Thyroid gland (tissue), 4 donors: ENCODE measurements at regions of chr6 and their contacts with region 1.

Region 1: GRCh38 chr6:8219352-8219943 is 117.1 kb upstream of the EEF1E1 start:
- DNase-seq: peak; percentile 37 to 39
- H3K4me3 ChIP-seq: no peak overlapping the region
- H3K27ac ChIP-seq: no peak overlapping the region
- H3K4me1 ChIP-seq: no peaks in the 10 kb centered on the region
- H3K27me3 ChIP-seq: no peaks in the 10 kb centered on the region
- CTCF ChIP-seq: peak; percentile 66 to 82 (median 74)
- POLR2A ChIP-seq: no peak

Region 2: GRCh38 chr6:7431674-7432390 is 787.6 kb before region 1 on chr6:
- intact Hi-C with region 1: no loop called
- DNase-seq: peak; percentile 63 to 66
- H3K4me3 ChIP-seq: no peak overlapping the region
- H3K27ac ChIP-seq: no peak overlapping the region
- H3K4me1 ChIP-seq: no peaks in the 10 kb centered on the region
- H3K27me3 ChIP-seq: no peaks in the 10 kb centered on the region
- CTCF ChIP-seq: no peak
- POLR2A ChIP-seq: no peak

Region 3: DNA sequence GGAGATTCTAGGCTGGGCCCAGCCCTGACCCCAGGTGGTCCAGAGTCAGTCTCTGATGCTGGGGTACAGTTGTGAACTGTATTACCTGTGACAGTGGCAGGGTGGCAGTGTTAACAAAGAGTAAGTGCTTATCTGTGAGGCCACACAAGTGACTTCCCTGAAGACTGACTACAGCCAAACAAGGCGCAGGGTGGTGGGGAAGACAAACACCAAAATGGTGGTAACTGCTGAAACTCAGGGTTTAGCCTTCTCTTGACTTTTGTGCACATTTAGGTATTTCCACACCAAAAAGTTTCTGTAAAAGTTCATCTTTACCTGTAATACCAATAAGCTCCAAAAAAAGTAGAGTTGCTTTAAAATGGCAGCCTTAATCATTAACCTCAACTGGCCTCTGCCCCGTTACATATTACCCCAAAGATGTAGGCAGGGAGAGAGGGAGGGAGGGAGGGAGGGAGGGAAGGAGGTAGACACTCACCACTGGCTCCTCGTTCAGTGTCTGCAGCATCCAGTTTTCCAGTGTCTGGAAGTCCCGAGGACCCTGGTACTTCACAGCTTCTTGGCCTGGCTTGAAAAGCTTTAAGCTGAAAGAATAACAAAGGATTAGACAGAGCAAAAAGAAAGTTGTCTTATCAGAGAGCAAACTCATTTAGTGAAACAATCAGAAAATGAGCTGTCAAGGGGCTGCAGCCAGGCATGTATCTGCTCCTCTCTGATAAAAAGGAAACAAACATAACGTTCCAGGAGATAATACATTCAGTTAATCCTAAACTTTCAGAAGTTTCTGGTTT is 320.2 kb before region 1 on chr6:
- intact Hi-C with region 1: no loop called
- DNase-seq: no peak
- H3K4me3 ChIP-seq: no peak overlapping the region
- H3K27ac ChIP-seq: no peak overlapping the region
- H3K4me1 ChIP-seq: no peaks in the 10 kb centered on the region
- H3K27me3 ChIP-seq: no peaks in the 10 kb centered on the region
- CTCF ChIP-seq: no peak
- POLR2A ChIP-seq: no peak

Region 4: GRCh38 chr6:8131256-8131897 is 88.1 kb before region 1 on chr6:
- intact Hi-C with region 1: loop called (anchors 2 kb)
- DNase-seq: peak; percentile 54 to 62
- H3K4me3 ChIP-seq: no peak overlapping the region
- H3K27ac ChIP-seq: no peak overlapping the region
- H3K4me1 ChIP-seq: no peaks in the 10 kb centered on the region
- H3K27me3 ChIP-seq: no peaks in the 10 kb centered on the region
- CTCF ChIP-seq: peak in 4 of 6 experiments; percentile 54 to 83 (median 70)
- POLR2A ChIP-seq: no peak

Region 5: DNA sequence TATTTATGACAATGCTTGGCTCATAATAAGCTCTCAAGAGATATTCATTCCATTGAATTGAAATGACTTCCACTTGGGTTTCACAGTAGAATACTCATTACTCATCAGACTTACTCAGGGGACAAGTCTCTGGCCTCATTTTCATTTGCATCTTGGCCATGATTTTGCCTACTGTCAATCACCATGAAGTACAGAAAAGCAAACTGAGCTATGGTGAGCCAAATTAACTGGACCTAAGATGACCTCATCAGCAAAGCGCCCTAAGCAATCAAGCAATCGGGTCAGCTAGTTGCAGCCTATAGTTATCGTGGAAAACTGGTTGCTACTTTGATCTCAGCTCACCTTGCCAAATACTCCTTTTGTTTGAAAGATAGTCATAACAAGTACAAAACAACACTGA is 710.6 kb after region 1 on chr6:
- intact Hi-C with region 1: no loop called
- DNase-seq: no peak
- H3K4me3 ChIP-seq: no peak overlapping the region
- H3K27ac ChIP-seq: no peak overlapping the region
- H3K4me1 ChIP-seq: no peaks in the 10 kb centered on the region
- H3K27me3 ChIP-seq: no peaks in the 10 kb centered on the region
- CTCF ChIP-seq: no peak
- POLR2A ChIP-seq: no peak

Region 6: GRCh38 chr6:9252799-9253198 is 1033.4 kb after region 1 on chr6:
- intact Hi-C with region 1: no loop called
- DNase-seq: no peak
- H3K4me3 ChIP-seq: no peak overlapping the region
- H3K27ac ChIP-seq: no peak overlapping the region
- H3K4me1 ChIP-seq: no peaks in the 10 kb centered on the region
- H3K27me3 ChIP-seq: no peaks in the 10 kb centered on the region
- CTCF ChIP-seq: no peak
- POLR2A ChIP-seq: no peak